PC-9 (cell line): ENCODE measurements at regions of chr7 and their contacts with region 1.

Region 1: GRCh38 chr7:100137851-100138760 is 10.6 kb upstream of the LAMTOR4 start:
- DNase-seq: peak; percentile 55 to 98
- H3K4me3 ChIP-seq: no peak overlapping the region
- H3K27ac ChIP-seq: peak overlapping the region; percentile 61
- H3K4me1 ChIP-seq: peaks cover 43% of the 10 kb centered on the region
- H3K27me3 ChIP-seq: no peaks in the 10 kb centered on the region
- CTCF ChIP-seq: no peak

Region 2: GRCh38 chr7:100109521-100110162 is 28.5 kb before region 1 on chr7:
- CTCF ChIA-PET with region 1: no interaction called
- POLR2A ChIA-PET with region 1: no interaction called
- intact Hi-C with region 1: no loop called
- DNase-seq: no peak
- H3K4me3 ChIP-seq: no peak overlapping the region
- H3K27ac ChIP-seq: no peak overlapping the region
- H3K4me1 ChIP-seq: no peaks in the 10 kb centered on the region
- H3K27me3 ChIP-seq: no peaks in the 10 kb centered on the region
- CTCF ChIP-seq: no peak

Region 3: GRCh38 chr7:100394077-100394476 is 256.0 kb after region 1 on chr7:
- CTCF ChIA-PET with region 1: no interaction called
- POLR2A ChIA-PET with region 1: interaction called, 13 read pairs
- intact Hi-C with region 1: no loop called
- DNase-seq: no peak
- H3K4me3 ChIP-seq: no peak overlapping the region
- H3K27ac ChIP-seq: no peak overlapping the region
- H3K4me1 ChIP-seq: no peaks in the 10 kb centered on the region
- H3K27me3 ChIP-seq: peaks cover 3% of the 10 kb centered on the region; the same call in 1 of the 2 replicates
- CTCF ChIP-seq: no peak